A673 (cell line): ENCODE measurements at regions of chr3 and their contacts with region 1.

Region 1: DNA sequence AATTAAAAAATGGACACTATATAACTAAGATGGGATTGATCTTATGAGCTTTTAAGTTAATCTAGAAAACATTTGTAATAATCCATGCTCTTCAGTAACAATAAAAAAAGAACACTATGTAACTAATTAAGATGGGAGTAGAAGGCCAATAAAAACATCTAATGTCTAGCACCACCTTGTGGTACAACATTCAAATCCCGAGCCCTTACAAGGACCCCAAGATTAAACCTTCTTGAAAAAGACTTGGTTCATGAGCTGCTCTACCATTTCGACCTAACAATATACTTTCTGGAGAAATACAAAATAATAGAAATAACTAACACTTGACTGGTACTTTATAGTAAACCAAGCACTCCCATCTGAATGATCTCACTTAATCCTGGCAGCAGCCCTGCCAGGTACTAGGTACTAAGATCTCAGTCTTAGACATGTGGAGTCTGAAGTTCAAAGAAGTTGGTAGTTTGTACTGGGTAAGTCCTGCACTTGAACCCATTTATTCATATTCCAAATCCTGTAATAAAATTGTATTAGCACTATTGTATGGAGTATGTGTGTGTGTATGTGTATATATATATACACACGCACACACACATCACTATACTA is 21.8 kb downstream of the METTL6 start:
- DNase-seq: peak; percentile 73
- H3K4me3 ChIP-seq: no peak overlapping the region
- H3K27ac ChIP-seq: no peak overlapping the region
- H3K4me1 ChIP-seq: no peaks in the 10 kb centered on the region
- H3K27me3 ChIP-seq: no peaks in the 10 kb centered on the region
- CTCF ChIP-seq: peak; percentile 75

Region 2: GRCh38 chr3:14204515-14205284 is 1200.8 kb before region 1 on chr3:
- CTCF ChIA-PET with region 1: no interaction called
- POLR2A ChIA-PET with region 1: no interaction called
- intact Hi-C with region 1: no loop called
- DNase-seq: no peak
- H3K4me3 ChIP-seq: no peak overlapping the region
- H3K27ac ChIP-seq: no peak overlapping the region
- H3K4me1 ChIP-seq: no peaks in the 10 kb centered on the region
- H3K27me3 ChIP-seq: no peaks in the 10 kb centered on the region
- CTCF ChIP-seq: no peak

Region 3: DNA sequence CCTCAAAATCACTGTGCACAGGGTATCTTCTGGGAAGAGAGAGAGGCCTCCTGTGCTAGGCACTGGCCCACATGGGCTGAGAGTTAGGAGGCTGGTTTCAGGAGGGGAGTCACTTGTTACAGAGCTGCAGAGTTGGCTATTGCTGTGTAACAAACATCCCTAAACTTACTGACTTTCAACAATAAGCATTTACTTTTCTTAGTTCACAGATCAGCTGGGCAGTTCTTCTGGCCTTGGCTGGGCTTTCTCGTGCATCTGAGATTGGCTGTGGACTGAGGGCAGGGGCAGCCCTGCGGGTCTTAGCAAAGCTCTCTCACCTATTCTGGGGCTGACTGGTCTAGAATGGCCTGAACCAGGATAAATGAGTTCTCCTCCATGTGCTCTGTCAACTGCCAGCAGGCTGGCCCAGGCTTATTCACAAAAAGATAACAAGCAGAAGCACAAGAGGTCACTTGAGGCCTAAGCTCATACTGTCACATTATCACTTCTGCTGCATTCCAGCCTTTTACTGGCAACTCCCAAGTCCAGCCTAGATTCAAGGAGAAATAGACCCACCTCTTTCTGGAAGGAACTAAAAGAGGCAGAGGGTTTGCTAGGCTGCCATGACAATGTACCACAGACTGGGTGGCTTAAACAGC is 289.4 kb before region 1 on chr3:
- CTCF ChIA-PET with region 1: no interaction called
- POLR2A ChIA-PET with region 1: no interaction called
- intact Hi-C with region 1: loop called (anchors 5 kb)
- DNase-seq: no peak
- H3K4me3 ChIP-seq: no peak overlapping the region
- H3K27ac ChIP-seq: no peak overlapping the region
- H3K4me1 ChIP-seq: no peaks in the 10 kb centered on the region
- H3K27me3 ChIP-seq: no peaks in the 10 kb centered on the region
- CTCF ChIP-seq: no peak

Region 4: GRCh38 chr3:15440891-15441290 is 35.3 kb after region 1 on chr3:
- CTCF ChIA-PET with region 1: interaction called, 12 read pairs
- POLR2A ChIA-PET with region 1: no interaction called
- intact Hi-C with region 1: no loop called
- DNase-seq: no peak
- H3K4me3 ChIP-seq: no peak overlapping the region
- H3K27ac ChIP-seq: no peak overlapping the region
- H3K4me1 ChIP-seq: no peaks in the 10 kb centered on the region
- H3K27me3 ChIP-seq: no peaks in the 10 kb centered on the region
- CTCF ChIP-seq: no peak

Region 5: DNA sequence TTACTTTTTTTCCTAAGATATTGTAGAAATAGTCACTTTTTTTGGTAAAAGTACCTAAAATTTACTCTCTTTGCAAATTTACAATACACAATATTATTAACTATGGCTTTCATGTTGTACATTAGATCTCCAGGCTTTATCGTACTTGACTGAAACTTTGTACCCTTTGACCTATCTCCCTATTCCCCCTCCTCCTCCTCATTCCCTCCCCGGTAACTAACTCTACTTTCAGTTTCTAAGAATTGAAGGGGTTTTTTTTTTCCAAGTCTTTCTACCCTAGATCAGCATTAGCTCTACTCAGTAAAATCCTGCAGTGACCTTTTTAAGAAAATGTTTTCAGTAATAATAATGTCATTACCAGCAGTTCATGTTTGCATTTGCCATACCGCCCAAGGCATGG is 185.7 kb after region 1 on chr3:
- CTCF ChIA-PET with region 1: no interaction called
- POLR2A ChIA-PET with region 1: no interaction called
- intact Hi-C with region 1: no loop called
- DNase-seq: no peak
- H3K4me3 ChIP-seq: no peak overlapping the region
- H3K27ac ChIP-seq: no peak overlapping the region
- H3K4me1 ChIP-seq: no peaks in the 10 kb centered on the region
- H3K27me3 ChIP-seq: no peaks in the 10 kb centered on the region
- CTCF ChIP-seq: no peak